ENCODE measurements at regions of chr14 and their contacts with region 1.

Region 1: GRCh38 chr14:51865953-51866747 is 5.7 kb downstream of the GNG2 start:
- DNase-seq: no peak
- H3K4me3 ChIP-seq: no peak overlapping the region
- H3K27ac ChIP-seq: no peak overlapping the region
- H3K4me1 ChIP-seq: peaks cover 10% of the 10 kb centered on the region; the same call in 1 of the 2 replicates
- H3K27me3 ChIP-seq: no peaks in the 10 kb centered on the region
- CTCF ChIP-seq: no peak

Region 2: GRCh38 chr14:51939727-51940390 is 73.7 kb after region 1 on chr14:
- CTCF ChIA-PET with region 1: no interaction called
- POLR2A ChIA-PET with region 1: interaction called, 33 read pairs
- intact Hi-C with region 1: no loop called
- DNase-seq: no peak
- H3K4me3 ChIP-seq: no peak overlapping the region
- H3K27ac ChIP-seq: no peak overlapping the region
- H3K4me1 ChIP-seq: no peaks in the 10 kb centered on the region
- H3K27me3 ChIP-seq: no peaks in the 10 kb centered on the region
- CTCF ChIP-seq: no peak

Measured in PC-9 (cell line).